ENCODE measurements at regions of chr20 and their contacts with region 1.

Region 1: DNA sequence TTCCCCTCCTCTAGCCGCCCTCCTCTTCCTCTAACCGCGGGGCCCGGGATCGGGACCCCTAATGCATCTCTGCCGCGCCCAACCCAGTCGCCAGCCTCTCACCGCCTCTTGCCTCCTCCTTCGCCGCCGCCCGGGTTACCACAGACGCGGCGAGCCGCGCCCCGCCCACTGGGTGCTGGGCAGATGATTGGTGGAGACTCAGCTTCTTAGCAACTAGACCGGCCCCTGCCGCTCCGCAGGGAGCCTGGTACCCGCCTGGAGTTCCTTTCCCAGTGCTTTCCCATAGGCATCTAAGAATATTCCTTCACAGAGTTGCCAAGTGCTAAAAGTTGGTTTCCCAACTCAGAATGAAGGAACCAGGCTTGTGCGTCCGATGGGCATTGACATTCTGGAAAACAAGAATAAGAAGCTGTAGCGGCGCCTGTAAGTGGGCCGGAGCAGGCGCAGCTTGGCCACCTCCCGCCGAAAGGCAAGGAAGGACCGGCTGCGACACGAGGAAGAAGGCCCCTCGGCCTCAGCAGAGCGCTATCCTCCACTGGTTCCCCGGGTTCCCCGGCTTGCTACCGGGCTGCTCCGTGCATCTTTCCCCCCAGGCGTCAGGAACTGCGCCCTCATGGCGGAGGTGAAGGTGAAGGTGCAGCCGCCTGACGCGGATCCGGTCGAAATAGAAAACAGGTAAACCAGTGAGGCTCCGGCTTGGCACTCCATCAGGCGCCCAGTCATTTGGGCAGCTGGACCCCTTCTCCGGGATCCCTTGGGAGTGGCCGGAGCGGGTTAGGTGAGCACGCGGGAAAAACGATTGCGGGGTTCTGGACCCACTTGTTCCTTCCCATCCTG is at the starts of genes DZANK1 and POLR3F:
- DNase-seq: peak; percentile 97 to 99
- ATAC-seq: peak; percentile 99 to 100
- H3K4me3 ChIP-seq: peak within 1 kb of the TSS; percentile 76
- H3K27ac ChIP-seq: peak within 1 kb of the TSS; percentile 85 to 86
- H3K4me1 ChIP-seq: peaks cover 21% of the 10 kb centered on the region
- CTCF ChIP-seq: no peak
- EP300 ChIP-seq: no peak
- POLR2A ChIP-seq: peak; percentile 80
- RAD21 ChIP-seq: no peak
- polyA plus RNA-seq, gene DZANK1: 5.1 and 5.8 TPM in 2 replicates
- polyA plus RNA-seq, gene POLR3F: 13.6 and 20.7 TPM in 2 replicates

Region 2: GRCh38 chr20:18077157-18077556 is 390.0 kb before region 1 on chr20:
- CTCF ChIA-PET with region 1: no interaction called
- POLR2A ChIA-PET with region 1: no interaction called
- DNase-seq: no peak
- ATAC-seq: peak; percentile 42 to 49; a peak in 3 of 6 replicates
- H3K4me3 ChIP-seq: no peak overlapping the region
- H3K27ac ChIP-seq: no peak overlapping the region
- H3K4me1 ChIP-seq: no peaks in the 10 kb centered on the region
- CTCF ChIP-seq: no peak
- EP300 ChIP-seq: no peak
- POLR2A ChIP-seq: no peak
- RAD21 ChIP-seq: no peak

Region 3: DNA sequence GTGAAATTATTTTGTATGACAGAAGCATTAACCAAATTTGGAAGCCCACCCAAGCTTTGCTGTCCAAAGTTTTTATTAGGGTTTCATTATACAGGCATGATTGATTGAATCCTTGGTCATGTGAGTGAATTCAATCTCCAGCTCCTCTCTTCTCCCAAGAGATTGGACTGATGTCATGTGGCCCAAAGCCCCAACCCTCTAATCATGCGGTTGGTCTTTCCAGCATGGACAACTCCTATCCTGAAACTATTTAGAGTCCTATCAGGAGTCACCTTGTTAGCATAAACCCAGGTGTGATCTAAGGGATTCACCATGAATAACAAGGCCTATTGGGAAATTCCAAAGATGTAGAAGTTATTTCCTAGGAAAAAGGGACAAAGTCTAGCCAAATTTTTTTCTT is 10.7 kb after region 1 on chr20:
- CTCF ChIA-PET with region 1: interaction called, 4 read pairs
- POLR2A ChIA-PET with region 1: interaction called, 10 read pairs
- DNase-seq: no peak
- ATAC-seq: no peak
- H3K4me3 ChIP-seq: no peak overlapping the region
- H3K27ac ChIP-seq: no peak overlapping the region
- H3K4me1 ChIP-seq: no peaks in the 10 kb centered on the region
- CTCF ChIP-seq: no peak
- EP300 ChIP-seq: no peak
- POLR2A ChIP-seq: no peak
- RAD21 ChIP-seq: no peak

Region 4: GRCh38 chr20:18496740-18497592 is 29.9 kb after region 1 on chr20 and contains the start of gene RBBP9:
- CTCF ChIA-PET with region 1: no interaction called
- POLR2A ChIA-PET with region 1: interaction called, 20 read pairs
- DNase-seq: peak; percentile 86 to 88
- ATAC-seq: peak; percentile 100
- H3K4me3 ChIP-seq: peak within 1 kb of the TSS; percentile 70
- H3K27ac ChIP-seq: peak within 1 kb of the TSS; percentile 82 to 87
- H3K4me1 ChIP-seq: peaks cover 12% of the 10 kb centered on the region
- CTCF ChIP-seq: no peak
- EP300 ChIP-seq: no peak
- POLR2A ChIP-seq: peak; percentile 92
- RAD21 ChIP-seq: no peak
- polyA plus RNA-seq, gene RBBP9: 35.1 and 41.1 TPM in 2 replicates